Transverse colon (tissue), 4 donors: ENCODE measurements at regions of chr2 and their contacts with region 1.

Region 1: DNA sequence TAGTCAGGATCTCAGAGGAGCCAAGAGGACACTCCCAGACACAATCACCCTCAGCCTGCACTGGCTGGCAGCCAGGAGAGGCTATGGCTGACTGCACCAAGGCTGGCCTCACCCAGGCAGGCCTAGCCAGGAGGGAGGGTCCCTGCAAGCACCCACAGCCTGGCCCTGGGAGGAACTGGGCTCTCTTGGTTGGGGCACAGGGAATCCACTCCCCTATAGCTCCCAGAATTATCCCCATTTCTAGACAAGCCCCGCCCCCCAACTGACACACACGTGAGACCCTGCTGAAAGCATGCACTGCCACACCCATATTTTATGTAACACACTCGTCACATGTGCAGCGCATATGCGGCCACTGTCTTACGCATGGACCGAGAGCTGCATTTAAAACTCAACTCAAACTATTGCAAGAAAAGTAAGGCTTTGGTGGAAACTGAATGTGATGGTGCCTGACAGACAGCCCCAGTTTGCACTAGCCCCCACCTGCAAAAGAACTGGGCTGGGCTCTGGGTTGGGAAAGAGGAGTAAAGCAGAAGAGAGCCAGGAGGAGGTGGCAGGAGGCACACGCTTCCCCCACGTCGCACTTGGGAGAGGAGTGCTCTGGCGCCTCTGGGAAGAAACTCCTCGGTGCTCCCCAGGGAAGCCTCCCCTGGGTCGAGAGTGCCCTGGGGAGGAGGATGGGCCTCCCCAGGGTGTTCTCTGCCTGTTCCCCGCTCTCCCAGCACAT is 28.9 kb upstream of the ARHGEF4 start:
- DNase-seq: peak; percentile 83
- H3K4me3 ChIP-seq: no peak overlapping the region
- H3K27ac ChIP-seq: no peak overlapping the region
- H3K4me1 ChIP-seq: peaks cover 0 to 8% (median 4%) of the 10 kb centered on the region in 4 donors
- H3K27me3 ChIP-seq: no peaks in the 10 kb centered on the region
- CTCF ChIP-seq: no peak
- EP300 ChIP-seq: no peak
- POLR2A ChIP-seq: no peak

Region 2: DNA sequence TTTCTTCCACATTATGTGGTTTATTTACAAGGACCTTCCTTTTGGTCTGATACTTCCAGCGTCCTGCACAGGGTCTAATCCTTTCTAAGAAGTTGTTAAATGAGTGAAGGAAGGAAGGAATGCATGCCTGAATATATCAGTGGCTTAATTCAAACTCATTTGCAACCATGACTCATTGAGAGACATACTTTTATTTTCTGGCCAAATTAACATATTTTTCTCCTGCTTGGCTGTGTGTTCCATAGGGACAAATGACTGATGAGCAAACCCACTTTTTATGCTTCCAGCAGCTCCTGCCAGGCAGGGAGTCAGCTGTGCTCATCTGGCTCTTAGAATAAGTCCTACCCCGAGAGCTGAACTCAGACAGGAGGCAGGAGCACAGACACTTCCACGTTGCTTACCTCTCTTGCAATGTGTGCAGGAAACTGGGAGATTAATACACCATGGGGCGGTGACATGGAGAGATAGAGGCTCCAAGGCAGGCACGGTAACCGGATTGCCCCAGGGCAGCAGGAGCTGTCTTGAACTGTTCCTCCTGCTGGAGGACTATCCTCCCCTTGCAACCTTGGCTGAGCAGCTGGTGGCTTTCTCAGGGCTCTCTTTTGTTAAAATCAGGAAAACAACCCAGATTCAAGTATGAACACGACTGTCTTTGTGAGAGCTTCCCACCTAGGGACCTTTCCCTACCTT is 1821.7 kb before region 1 on chr2:
- in situ Hi-C with region 1: no loop called
- intact Hi-C with region 1: no loop called
- DNase-seq: no peak
- H3K4me3 ChIP-seq: no peak overlapping the region
- H3K27ac ChIP-seq: no peak overlapping the region
- H3K4me1 ChIP-seq: no peaks in the 10 kb centered on the region
- H3K27me3 ChIP-seq: no peaks in the 10 kb centered on the region
- CTCF ChIP-seq: no peak
- EP300 ChIP-seq: no peak
- POLR2A ChIP-seq: no peak

Region 3: GRCh38 chr2:130303169-130303568 is 504.7 kb before region 1 on chr2:
- in situ Hi-C with region 1: no loop called
- intact Hi-C with region 1: no loop called
- DNase-seq: no peak
- H3K4me3 ChIP-seq: no peak overlapping the region
- H3K27ac ChIP-seq: no peak overlapping the region
- H3K4me1 ChIP-seq: no peaks in the 10 kb centered on the region
- H3K27me3 ChIP-seq: peaks cover 10% of the 10 kb centered on the region
- CTCF ChIP-seq: no peak
- EP300 ChIP-seq: no peak
- POLR2A ChIP-seq: no peak

Region 4: GRCh38 chr2:130873700-130874346 is 66.0 kb after region 1 on chr2:
- in situ Hi-C with region 1: loop called in 3 of 4 experiments (anchors 10 kb)
- intact Hi-C with region 1: no loop called
- DNase-seq: peak; percentile 79
- H3K4me3 ChIP-seq: no peak overlapping the region
- H3K27ac ChIP-seq: no peak overlapping the region
- H3K4me1 ChIP-seq: peaks cover 0 to under 1% (median 0%) of the 10 kb centered on the region in 4 donors
- H3K27me3 ChIP-seq: no peaks in the 10 kb centered on the region
- CTCF ChIP-seq: peak; percentile 58 to 69 (median 68)
- EP300 ChIP-seq: no peak
- POLR2A ChIP-seq: no peak